ENCODE measurements at regions of chr4 and their contacts with region 1.

Region 1: GRCh38 chr4:75800972-75801371 is 76.6 kb downstream of the USO1 start:
- DNase-seq: no peak
- ATAC-seq: no peak
- H3K4me3 ChIP-seq: no peak overlapping the region
- H3K27ac ChIP-seq: no peak overlapping the region
- H3K4me1 ChIP-seq: no peaks in the 10 kb centered on the region
- H3K27me3 ChIP-seq: no peaks in the 10 kb centered on the region

Region 2: GRCh38 chr4:75698162-75698962 is 102.6 kb before region 1 on chr4:
- intact Hi-C with region 1: no loop called
- DNase-seq: no peak
- ATAC-seq: peak in 1 of 2 donors; percentile 12
- H3K4me3 ChIP-seq: no peak overlapping the region
- H3K27ac ChIP-seq: no peak overlapping the region
- H3K4me1 ChIP-seq: peaks cover 4% of the 10 kb centered on the region
- H3K27me3 ChIP-seq: no peaks in the 10 kb centered on the region

Region 3: DNA sequence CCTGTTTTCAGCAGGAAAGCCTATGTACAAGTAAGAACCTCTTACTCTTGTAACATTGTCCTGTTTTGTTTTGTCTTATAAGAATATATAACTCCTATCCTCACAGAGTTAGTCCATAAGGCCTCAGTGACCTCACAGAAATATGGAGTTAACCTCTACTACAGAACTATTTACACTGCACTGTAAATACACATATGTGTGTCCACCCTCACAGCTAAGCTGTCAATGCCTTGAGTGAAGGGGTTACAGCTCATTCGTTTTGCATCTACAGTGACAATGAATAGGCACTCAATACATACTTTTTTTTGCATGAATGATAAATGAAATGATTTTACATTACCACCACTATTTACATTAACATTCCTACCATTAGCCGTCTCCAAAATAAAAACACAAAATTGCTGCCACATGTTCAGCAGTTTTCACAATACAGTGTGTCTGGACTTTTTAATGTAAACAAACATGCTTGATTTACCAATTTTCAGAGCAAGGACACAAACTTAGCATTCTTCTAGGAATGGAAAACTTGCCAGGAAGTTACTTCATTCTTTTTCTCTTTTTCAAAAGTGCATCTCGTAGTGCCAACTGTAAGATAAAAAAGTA is 149.3 kb after region 1 on chr4:
- intact Hi-C with region 1: loop called in 1 of 4 experiments (anchors 10 kb)
- DNase-seq: no peak
- ATAC-seq: no peak
- H3K4me3 ChIP-seq: no peak overlapping the region
- H3K27ac ChIP-seq: no peak overlapping the region
- H3K4me1 ChIP-seq: no peaks in the 10 kb centered on the region
- H3K27me3 ChIP-seq: no peaks in the 10 kb centered on the region